ENCODE measurements at regions of chr15 and their contacts with region 1.

Region 1: DNA sequence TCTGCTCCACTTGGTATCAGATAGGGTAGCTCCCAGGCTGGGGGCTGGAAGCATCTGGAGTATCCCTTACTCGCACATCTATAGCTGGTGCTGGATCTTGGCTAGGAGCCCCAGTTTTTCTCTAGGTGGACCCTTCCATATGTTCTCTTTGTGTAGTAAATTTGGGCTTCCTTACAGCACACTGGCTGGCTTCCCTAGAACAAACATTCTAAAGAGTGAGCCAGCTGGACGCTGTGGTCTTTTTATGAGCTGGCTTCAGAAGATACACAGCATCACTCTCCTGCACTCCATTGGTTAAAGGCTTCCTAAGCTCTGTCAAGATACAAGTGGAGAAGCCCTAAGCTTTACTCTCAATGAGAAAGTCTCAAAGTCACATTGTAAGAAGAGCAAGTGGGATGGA is 322.1 kb downstream of the WDR72 start:
- DNase-seq: no peak
- H3K4me3 ChIP-seq: no peak overlapping the region
- H3K4me3 Mint-ChIP-seq: no peak overlapping the region
- H3K27ac Mint-ChIP-seq: no peak overlapping the region
- H3K4me1 ChIP-seq: no peaks in the 10 kb centered on the region
- H3K4me1 Mint-ChIP-seq: no peaks in the 10 kb centered on the region
- H3K27me3 ChIP-seq: no peaks in the 10 kb centered on the region
- H3K27me3 Mint-ChIP-seq: peaks cover 2% of the 10 kb centered on the region
- CTCF ChIP-seq: no peak

Region 2: DNA sequence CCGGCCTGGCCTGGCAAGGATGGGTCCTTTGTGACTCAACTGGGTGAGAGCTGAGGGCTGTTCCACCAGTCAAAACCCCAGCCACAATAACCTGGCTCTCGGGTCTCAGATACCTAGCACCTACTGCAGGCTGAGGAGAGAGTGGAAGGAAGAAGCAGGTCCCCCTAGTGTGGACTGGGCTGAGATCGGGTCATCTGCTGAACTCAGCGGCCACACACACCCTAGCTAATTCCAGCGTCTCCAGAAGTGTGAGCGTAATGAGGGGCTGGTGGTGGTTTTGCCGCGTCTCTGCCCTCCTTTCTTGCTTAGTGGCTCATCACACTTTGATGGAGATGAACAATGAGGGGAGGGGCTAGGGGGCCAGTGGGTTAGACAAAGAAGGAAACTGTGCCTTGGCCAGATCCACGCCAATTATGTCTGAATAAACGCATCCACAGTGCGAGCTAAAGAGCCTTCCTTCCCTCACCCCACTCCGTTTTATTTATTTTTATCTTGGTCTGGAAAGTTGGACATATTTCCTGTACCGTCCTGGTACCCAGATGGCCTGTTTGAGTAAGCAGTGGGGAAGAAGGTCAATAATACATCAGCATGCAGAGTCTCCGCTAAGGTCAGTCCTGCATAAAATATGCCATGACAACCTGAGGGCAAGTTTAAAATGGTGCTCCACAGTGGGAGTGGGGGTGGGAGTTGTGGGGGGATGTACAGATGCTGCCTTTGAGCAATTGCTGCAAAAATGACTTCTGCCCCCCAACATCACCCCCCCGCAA is 47.9 kb before region 1 on chr15:
- CTCF ChIA-PET with region 1: no interaction called
- POLR2A ChIA-PET with region 1: no interaction called
- intact Hi-C with region 1: no loop called
- DNase-seq: no peak
- H3K4me3 ChIP-seq: no peak overlapping the region
- H3K4me3 Mint-ChIP-seq: no peak overlapping the region
- H3K27ac Mint-ChIP-seq: no peak overlapping the region
- H3K4me1 ChIP-seq: no peaks in the 10 kb centered on the region
- H3K4me1 Mint-ChIP-seq: no peaks in the 10 kb centered on the region
- H3K27me3 ChIP-seq: no peaks in the 10 kb centered on the region
- H3K27me3 Mint-ChIP-seq: peaks cover 4% of the 10 kb centered on the region
- CTCF ChIP-seq: no peak

Region 3: DNA sequence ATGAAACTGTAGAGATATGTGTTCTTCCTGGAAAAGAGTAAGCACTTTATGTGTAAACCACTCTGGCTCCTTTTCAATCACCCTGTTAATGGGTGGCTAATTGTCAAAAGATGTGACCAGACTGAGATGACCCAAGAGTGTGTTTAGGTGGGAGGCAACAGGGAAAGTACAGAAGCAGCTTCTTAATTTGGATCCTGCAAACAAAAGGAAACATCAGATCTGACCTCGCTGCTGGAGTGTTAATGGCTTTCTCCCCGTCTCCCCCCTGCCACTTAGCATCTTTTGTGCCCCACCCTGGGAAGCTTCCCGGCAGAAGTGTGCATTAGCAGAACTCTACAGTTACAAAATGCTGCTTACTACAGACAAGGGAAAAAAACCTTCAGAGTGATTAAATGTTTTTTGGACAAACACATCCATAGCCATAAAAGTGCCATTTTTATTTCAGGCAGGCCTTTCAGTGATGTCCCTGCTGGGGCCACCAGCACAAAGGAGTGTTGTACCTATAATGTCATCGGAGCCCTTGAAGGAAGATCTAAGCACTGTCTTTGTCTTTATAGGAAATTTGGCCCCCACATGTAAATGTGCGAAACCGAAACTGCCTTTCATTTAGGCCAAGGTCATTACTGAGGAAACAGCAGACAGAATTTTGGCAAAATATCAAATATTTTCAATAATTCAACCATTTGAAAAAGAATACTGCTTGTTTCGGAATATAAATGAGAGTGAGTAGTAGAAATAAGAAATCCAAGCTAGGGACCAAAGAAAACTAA is 11.1 kb after region 1 on chr15:
- CTCF ChIA-PET with region 1: interaction called, 10 read pairs
- POLR2A ChIA-PET with region 1: interaction called, 3 read pairs
- intact Hi-C with region 1: no loop called
- DNase-seq: no peak
- H3K4me3 ChIP-seq: no peak overlapping the region
- H3K4me3 Mint-ChIP-seq: no peak overlapping the region
- H3K27ac Mint-ChIP-seq: no peak overlapping the region
- H3K4me1 ChIP-seq: peaks cover 14% of the 10 kb centered on the region
- H3K4me1 Mint-ChIP-seq: no peaks in the 10 kb centered on the region
- H3K27me3 ChIP-seq: no peaks in the 10 kb centered on the region; the same call in 1 of the 2 replicates
- H3K27me3 Mint-ChIP-seq: peaks cover 4% of the 10 kb centered on the region
- CTCF ChIP-seq: no peak

Region 4: GRCh38 chr15:55422089-55422488 is 1984.7 kb after region 1 on chr15:
- CTCF ChIA-PET with region 1: no interaction called
- POLR2A ChIA-PET with region 1: no interaction called
- intact Hi-C with region 1: no loop called
- DNase-seq: no peak
- H3K4me3 ChIP-seq: no peak overlapping the region
- H3K4me3 Mint-ChIP-seq: no peak overlapping the region
- H3K27ac Mint-ChIP-seq: no peak overlapping the region
- H3K4me1 ChIP-seq: no peaks in the 10 kb centered on the region
- H3K4me1 Mint-ChIP-seq: no peaks in the 10 kb centered on the region
- H3K27me3 ChIP-seq: no peaks in the 10 kb centered on the region
- H3K27me3 Mint-ChIP-seq: no peaks in the 10 kb centered on the region
- CTCF ChIP-seq: no peak

Measured in Caco-2 (cell line).